Spleen (tissue), 13 donors: ENCODE measurements at regions of chr4 and their contacts with region 1.

Region 1: DNA sequence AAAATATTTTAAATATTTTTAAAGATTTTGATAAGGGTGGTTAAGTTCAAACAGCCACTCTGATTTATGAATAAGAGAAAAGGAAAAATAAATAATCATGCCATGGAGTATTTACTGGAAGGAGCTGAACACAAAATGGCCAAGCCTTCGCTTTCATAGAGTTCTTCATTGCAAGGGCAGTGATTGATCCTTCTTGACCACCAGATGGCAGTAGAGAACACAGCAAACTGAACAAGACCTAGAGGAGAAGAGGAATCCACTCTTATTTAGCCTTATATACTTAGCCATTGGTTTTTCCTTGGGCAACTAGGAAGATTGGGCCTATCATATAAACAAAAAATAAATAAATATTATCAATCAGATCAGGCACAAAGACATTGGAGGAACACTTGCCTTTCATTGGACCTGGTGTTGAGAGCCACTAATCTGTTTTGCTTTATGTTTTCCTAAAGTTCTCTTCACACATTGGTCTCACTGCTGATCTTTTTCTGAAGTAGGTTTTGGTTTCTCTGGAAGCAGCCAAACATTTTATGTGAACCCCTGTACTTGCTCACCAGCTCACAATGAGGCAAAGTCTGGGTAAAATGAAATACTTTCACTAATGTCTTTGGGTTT is 58.1 kb upstream of the PARM1 start:
- DNase-seq: no peak
- H3K4me3 ChIP-seq: no peak overlapping the region
- H3K27ac ChIP-seq: no peak overlapping the region
- H3K4me1 ChIP-seq: peaks cover 0 to 21% (median 6%) of the 10 kb centered on the region in 6 donors
- H3K27me3 ChIP-seq: no peaks in the 10 kb centered on the region
- CTCF ChIP-seq: peak; percentile 37 to 89 (median 79)
- POLR2A ChIP-seq: no peak

Region 2: GRCh38 chr4:75561790-75562189 is 686.9 kb after region 1 on chr4:
- intact Hi-C with region 1: loop called (anchors 10 kb)
- DNase-seq: no peak
- H3K4me3 ChIP-seq: no peak overlapping the region
- H3K27ac ChIP-seq: no peak overlapping the region
- H3K4me1 ChIP-seq: peaks cover 0 to 16% (median 0%) of the 10 kb centered on the region in 6 donors
- H3K27me3 ChIP-seq: no peaks in the 10 kb centered on the region
- CTCF ChIP-seq: no peak
- POLR2A ChIP-seq: no peak